ENCODE measurements at regions of chr4 and their contacts with region 1.

Region 1: GRCh38 chr4:140851032-140851636 is 94.9 kb upstream of the TBC1D9 start:
- DNase-seq: no peak
- ATAC-seq: no peak
- H3K4me3 ChIP-seq: no peak overlapping the region
- H3K27ac ChIP-seq: no peak overlapping the region
- H3K4me1 ChIP-seq: no peaks in the 10 kb centered on the region
- H3K27me3 ChIP-seq: no peaks in the 10 kb centered on the region

Region 2: DNA sequence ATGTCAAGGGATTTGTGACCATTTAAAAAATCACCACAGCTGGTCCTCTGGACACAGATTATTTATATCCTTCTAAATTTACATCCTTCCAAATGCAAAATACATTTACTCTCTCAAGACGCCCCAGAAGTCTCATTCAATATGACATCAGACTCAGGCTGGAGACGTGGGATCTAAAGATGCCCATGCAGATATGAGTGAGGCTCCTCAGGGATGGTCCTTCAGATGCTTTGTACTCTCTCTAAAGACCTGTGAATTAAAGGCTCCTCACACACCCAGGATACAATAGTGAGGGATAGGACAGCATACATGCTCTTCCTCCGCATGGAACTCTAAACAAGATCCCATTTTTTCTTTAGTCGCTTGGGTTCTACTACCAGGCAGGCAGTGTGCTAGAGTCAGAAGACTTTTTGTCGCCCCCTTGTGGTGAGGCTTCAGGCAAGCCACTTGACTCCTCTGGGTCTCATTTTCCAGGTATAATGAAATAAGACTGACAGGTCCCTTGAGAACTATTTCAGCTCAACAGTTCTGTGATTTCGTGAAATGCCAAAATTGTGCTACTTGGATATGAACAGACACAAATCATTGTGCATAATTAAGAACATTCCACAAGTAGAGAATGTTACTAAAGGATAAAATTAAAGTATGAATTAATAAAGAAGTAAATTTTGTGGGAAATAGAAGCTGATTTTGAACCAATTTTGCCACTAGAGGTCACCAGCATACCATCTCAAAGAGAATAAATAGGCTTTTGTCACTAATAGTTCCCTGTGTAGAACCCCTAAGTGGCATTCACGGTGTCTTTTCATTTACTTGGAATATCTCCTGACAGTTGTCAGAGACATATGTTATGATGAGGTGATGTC is 491.3 kb before region 1 on chr4:
- intact Hi-C with region 1: loop called (anchors 2 to 5 kb)
- DNase-seq: peak; percentile 82 to 84
- ATAC-seq: peak; percentile 81
- H3K4me3 ChIP-seq: no peak overlapping the region
- H3K27ac ChIP-seq: no peak overlapping the region
- H3K4me1 ChIP-seq: no peaks in the 10 kb centered on the region
- H3K27me3 ChIP-seq: no peaks in the 10 kb centered on the region

Region 3: GRCh38 chr4:140439644-140440142 is 411.4 kb before region 1 on chr4:
- intact Hi-C with region 1: no loop called
- DNase-seq: no peak
- ATAC-seq: no peak
- H3K4me3 ChIP-seq: no peak overlapping the region
- H3K27ac ChIP-seq: no peak overlapping the region
- H3K4me1 ChIP-seq: no peaks in the 10 kb centered on the region
- H3K27me3 ChIP-seq: no peaks in the 10 kb centered on the region

Region 4: DNA sequence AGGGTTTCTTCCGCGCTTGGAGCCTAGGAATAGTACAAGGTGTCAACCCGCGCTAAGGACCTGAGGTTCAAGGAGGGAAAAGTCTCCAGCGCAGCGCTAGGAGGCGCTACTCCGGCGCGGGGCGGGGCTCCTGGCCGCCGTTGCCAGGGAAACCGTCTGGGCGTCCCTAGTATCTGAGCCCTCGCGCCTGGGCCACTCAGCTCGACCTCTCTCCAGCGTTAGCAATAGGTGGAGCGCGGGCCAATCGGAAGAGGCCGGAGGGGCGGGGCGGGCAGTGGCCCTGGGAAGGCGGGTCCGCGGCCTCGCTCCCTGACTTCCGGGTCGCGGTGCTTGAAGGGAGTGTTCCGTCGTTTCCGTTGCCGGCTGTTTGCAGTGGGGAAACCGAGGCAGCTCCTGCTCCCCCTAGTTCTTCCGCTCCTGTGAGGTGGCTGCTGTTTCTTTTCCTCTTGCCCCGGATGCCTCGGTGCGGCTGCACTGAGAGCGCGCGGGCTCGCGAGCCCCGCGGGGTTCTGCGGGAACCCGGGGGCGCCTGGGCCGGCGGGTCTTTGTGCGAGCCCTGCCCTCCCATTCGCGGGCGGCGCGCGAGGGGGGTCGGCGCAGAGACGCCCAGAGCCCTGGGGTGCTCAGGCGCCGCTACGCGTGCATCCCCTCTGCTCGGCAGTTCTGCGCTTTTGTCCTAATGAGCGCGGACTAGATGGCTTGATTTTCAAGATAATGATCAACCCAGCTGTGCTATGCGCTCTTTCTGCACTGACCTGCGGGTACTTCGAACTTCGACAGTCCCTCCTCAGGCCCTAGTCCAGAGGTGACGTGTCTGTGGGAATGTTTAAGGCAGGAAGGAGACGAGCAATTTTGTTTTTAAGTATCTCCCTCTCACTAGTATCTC is 327.0 kb before region 1 on chr4 and contains the start of gene ELMOD2:
- intact Hi-C with region 1: loop called (anchors 10 kb)
- DNase-seq: peak; percentile 100
- ATAC-seq: peak; percentile 100
- H3K4me3 ChIP-seq: peak within 1 kb of the TSS; percentile 20 to 77
- H3K27ac ChIP-seq: no peak within 1 kb of the TSS
- H3K4me1 ChIP-seq: no peaks in the 10 kb centered on the region
- H3K27me3 ChIP-seq: no peaks in the 10 kb centered on the region
- total RNA-seq, gene ELMOD2: 23.0 to 25.7 TPM

Region 5: GRCh38 chr4:140790765-140791164 is 60.4 kb before region 1 on chr4:
- intact Hi-C with region 1: no loop called
- DNase-seq: peak in 1 of 2 donors; percentile 75
- ATAC-seq: peak; percentile 38
- H3K4me3 ChIP-seq: no peak overlapping the region
- H3K27ac ChIP-seq: no peak overlapping the region
- H3K4me1 ChIP-seq: no peaks in the 10 kb centered on the region
- H3K27me3 ChIP-seq: no peaks in the 10 kb centered on the region

Measured in aorta (tissue), 5 donors.